Right ventricle myocardium inferior (tissue), 1 donor: ENCODE measurements at regions of chr1 and their contacts with region 1.

Region 1: GRCh38 chr1:63928186-63929105 is 154.6 kb downstream of the ROR1 start:
- DNase-seq: no peak
- ATAC-seq: peak; percentile 98

Region 2: DNA sequence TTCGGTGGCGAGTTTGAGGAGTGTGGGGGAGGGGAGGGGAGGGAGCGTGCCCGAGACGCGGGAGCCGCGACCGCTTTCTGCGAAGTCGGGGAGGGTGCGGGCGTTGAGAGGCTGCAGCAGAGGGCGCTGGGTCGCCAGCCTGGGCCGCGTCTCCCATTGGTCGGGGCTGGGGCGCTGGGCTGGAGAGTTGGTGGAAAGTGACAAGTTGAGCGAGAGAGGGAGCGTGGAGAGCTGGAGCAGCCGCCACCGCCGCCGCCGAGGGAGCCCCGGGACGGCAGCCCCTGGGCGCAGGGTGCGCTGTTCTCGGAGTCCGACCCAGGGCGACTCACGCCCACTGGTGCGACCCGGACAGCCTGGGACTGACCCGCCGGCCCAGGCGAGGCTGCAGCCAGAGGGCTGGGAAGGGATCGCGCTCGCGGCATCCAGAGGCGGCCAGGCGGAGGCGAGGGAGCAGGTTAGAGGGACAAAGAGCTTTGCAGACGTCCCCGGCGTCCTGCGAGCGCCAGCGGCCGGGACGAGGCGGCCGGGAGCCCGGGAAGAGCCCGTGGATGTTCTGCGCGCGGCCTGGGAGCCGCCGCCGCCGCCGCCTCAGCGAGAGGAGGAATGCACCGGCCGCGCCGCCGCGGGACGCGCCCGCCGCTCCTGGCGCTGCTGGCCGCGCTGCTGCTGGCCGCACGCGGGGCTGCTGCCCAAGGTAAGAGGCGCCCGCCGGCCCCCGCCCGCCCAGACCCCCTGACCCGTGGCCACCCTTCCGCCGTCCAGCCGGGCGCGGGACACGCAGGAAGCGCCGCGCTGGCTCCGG is 154.4 kb before region 1 on chr1 and contains the start of gene ROR1:
- intact Hi-C with region 1: loop called (anchors 5 kb)
- DNase-seq: peak; percentile 91
- ATAC-seq: peak; percentile 97
- total RNA-seq, gene ROR1: 8.4 TPM